A549 (cell line): ENCODE measurements at regions of chr17 and their contacts with region 1.

Region 1: GRCh38 chr17:40443583-40444327 is 505 bp downstream of the IGFBP4 start:
- DNase-seq: peak; percentile 81 to 84
- ATAC-seq: peak; percentile 35 to 60
- H3K4me3 ChIP-seq: peak overlapping the region; percentile 78
- H3K27ac ChIP-seq: peak overlapping the region; percentile 98
- H3K4me1 ChIP-seq: peaks cover 30% of the 10 kb centered on the region
- CTCF ChIP-seq: peak; percentile 44
- EP300 ChIP-seq: no peak
- POLR2A ChIP-seq: peak; percentile 52
- RAD21 ChIP-seq: peak; percentile 27 to 34; a peak in 1 of 5 replicates

Region 2: DNA sequence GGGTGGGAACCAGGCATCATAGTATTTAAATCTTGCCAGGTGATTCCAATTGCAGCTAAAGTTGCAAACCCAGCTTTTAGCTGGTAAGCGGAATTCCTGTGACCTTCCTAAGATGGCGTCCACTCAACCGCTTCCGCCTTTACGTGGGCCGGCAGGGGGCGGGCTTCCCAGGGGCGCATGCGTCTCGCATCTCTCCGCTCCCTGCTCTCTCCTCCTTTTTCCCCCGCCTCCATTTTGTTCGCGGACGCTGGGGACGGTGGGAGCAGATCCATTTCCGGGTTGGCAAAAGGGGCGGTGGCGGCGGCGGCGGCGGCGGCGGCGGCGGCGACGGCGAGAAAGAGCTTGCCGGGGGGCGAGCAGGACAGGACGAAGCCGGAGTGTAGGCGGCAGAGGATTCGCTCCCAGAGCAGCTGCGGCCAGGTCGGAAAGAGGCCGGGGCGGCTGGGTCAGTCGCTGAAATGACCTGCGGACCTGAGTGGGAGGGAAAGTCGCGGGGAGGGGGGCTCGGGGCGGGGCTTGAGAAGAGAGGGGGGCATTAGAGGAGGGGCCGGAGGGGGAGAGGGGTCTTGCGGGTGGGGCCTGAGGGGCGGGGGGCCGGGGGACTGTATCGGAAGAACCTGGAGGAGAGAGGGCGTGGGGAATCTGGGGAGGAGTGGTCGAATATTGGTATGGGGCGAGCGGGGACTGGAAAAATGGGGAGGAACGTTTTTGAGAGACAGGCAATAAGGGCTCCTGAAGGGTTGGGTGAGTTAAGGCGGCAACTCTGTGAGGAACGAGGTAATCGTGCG is 224.5 kb before region 1 on chr17 and contains the start of gene WIPF2:
- CTCF ChIA-PET with region 1: no interaction called
- POLR2A ChIA-PET with region 1: no interaction called
- DNase-seq: peak; percentile 96 to 98
- ATAC-seq: peak; percentile 95 to 98
- H3K4me3 ChIP-seq: peak within 1 kb of the TSS; percentile 70
- H3K27ac ChIP-seq: peak within 1 kb of the TSS; percentile 87 to 92
- H3K4me1 ChIP-seq: peaks cover 17% of the 10 kb centered on the region; the same call in 2 of the 3 replicates
- CTCF ChIP-seq: 0 out of 3 replicates have a peak, but pooled peaks have one; percentile 29
- EP300 ChIP-seq: no peak
- POLR2A ChIP-seq: no peak; the same call in 1 of the 2 replicates
- RAD21 ChIP-seq: no peak
- polyA plus RNA-seq, gene WIPF2: 13.8 and 15.3 TPM in 2 replicates

Region 3: GRCh38 chr17:40355123-40355803 is 88.5 kb before region 1 on chr17:
- CTCF ChIA-PET with region 1: interaction called, 11 read pairs
- POLR2A ChIA-PET with region 1: no interaction called
- DNase-seq: peak; percentile 77 to 97
- ATAC-seq: peak; percentile 58 to 84
- H3K4me3 ChIP-seq: no peak overlapping the region
- H3K27ac ChIP-seq: peak overlapping the region in 1 of 2 experiments; percentile 62; a peak in 3 of 6 replicates
- H3K4me1 ChIP-seq: peaks cover 52% of the 10 kb centered on the region
- CTCF ChIP-seq: peak; percentile 98
- EP300 ChIP-seq: no peak
- POLR2A ChIP-seq: no peak
- RAD21 ChIP-seq: peak; percentile 99 to 100

Region 4: GRCh38 chr17:40422990-40423616 is 20.7 kb before region 1 on chr17:
- CTCF ChIA-PET with region 1: interaction called, 53 read pairs
- POLR2A ChIA-PET with region 1: interaction called, 8 read pairs
- DNase-seq: peak; percentile 64 to 65
- ATAC-seq: peak; percentile 66 to 82; a peak in 5 of 6 replicates
- H3K4me3 ChIP-seq: no peak overlapping the region
- H3K27ac ChIP-seq: peak overlapping the region in 1 of 2 experiments; percentile 17; a peak in 1 of 6 replicates
- H3K4me1 ChIP-seq: peaks cover 25% of the 10 kb centered on the region
- CTCF ChIP-seq: peak; percentile 41
- EP300 ChIP-seq: no peak
- POLR2A ChIP-seq: no peak
- RAD21 ChIP-seq: no peak; a peak in 1 of 5 replicates

Region 5: DNA sequence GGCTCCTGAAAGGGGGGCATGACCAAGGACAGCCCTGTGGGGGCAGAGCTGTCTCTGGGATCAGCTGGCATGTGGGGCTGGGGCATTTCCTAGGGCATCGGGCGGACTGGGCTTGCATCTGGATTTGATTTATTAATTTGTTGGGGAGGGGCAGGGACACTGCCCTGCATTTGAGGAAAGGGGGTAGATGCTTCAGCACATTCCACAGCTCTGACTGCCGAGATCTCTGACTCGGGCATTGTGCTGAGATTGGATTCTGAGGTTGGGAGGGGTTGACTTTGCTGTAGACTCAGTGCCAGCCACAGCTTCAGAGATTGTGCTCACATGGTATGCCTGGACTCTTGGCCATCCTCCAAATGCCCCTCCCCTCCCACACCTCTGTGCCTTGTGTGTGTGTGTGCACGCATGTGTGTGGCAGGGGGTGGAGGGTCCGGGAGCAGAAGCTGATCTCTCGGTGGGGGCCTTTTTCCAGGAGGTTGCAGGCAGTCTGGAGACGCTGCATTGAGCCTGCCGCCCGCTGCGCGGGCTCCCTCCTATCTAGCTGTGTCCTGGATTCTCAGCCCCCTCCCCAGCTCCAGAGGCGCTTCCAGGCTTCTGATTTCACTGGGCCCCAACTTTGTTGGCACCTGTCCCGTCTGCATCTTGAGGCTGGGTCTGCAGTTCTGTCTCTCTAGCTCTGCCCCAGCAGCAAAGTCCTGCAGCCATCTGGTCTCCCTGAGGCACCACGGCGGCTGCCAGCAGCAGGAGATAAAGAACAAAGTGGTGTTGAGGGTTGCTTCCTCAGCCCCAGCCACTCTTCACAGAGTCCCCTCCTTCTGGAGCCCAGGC is 14.4 kb after region 1 on chr17:
- CTCF ChIA-PET with region 1: interaction called, 338 read pairs
- POLR2A ChIA-PET with region 1: interaction called, 14 read pairs
- DNase-seq: peak in 1 of 2 experiments; percentile 68
- ATAC-seq: peak in 1 of 2 experiments; percentile 7; a peak in 3 of 6 replicates
- H3K4me3 ChIP-seq: peak overlapping the region; percentile 16
- H3K27ac ChIP-seq: peak overlapping the region; percentile 71 to 90
- H3K4me1 ChIP-seq: peaks cover 100% of the 10 kb centered on the region
- CTCF ChIP-seq: no peak
- EP300 ChIP-seq: no peak; a peak in 1 of 5 replicates
- POLR2A ChIP-seq: no peak
- RAD21 ChIP-seq: no peak

Region 6: DNA sequence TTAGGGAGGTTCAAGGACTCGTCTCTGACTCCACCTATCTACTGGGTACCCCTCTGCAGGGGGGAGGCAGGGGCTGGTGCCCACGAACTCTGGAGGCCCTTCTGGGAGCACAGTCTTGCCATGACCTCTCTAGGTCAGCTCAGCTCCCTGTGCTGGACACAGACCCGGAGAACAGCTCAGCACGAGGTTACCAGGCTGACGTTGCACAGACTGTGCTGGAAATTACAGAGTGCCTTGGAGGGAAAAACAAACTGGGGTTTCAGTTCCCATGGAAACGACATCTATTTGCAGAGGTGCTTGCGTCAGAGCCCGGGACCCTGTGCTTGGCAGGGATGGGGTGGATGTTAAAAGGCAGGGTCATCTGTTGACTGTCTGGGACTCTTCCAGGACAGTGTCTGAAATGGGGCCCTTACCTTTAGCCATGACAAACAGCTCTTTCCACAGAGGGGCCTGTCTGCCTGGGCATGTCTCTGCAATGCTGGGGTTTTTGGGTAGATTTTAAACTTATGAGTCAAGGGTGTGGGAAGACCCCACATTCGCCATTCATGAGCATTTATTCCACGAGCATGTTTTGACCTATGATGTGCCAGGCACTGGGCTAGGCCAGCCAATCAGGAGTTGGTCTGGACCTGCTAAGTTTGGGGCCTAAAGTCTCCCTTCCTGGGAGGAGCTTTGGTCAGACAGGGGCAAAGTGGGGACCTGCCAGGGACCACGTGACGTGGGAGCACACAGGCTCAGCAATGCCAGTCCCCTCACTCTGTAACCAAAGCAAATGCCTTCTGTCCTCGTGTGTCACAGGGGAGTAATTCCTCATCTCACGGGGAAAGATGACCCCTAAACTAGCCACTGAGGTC is 99.0 kb after region 1 on chr17:
- CTCF ChIA-PET with region 1: interaction called, 822 read pairs
- POLR2A ChIA-PET with region 1: interaction called, 10 read pairs
- DNase-seq: peak; percentile 99 to 100
- ATAC-seq: peak; percentile 87 to 90
- H3K4me3 ChIP-seq: no peak overlapping the region
- H3K27ac ChIP-seq: peak overlapping the region; percentile 95 to 99
- H3K4me1 ChIP-seq: peaks cover 71% of the 10 kb centered on the region
- CTCF ChIP-seq: no peak
- EP300 ChIP-seq: peak; percentile 100
- POLR2A ChIP-seq: no peak
- RAD21 ChIP-seq: peak; percentile 4 to 55; a peak in 4 of 5 replicates

Region 7: DNA sequence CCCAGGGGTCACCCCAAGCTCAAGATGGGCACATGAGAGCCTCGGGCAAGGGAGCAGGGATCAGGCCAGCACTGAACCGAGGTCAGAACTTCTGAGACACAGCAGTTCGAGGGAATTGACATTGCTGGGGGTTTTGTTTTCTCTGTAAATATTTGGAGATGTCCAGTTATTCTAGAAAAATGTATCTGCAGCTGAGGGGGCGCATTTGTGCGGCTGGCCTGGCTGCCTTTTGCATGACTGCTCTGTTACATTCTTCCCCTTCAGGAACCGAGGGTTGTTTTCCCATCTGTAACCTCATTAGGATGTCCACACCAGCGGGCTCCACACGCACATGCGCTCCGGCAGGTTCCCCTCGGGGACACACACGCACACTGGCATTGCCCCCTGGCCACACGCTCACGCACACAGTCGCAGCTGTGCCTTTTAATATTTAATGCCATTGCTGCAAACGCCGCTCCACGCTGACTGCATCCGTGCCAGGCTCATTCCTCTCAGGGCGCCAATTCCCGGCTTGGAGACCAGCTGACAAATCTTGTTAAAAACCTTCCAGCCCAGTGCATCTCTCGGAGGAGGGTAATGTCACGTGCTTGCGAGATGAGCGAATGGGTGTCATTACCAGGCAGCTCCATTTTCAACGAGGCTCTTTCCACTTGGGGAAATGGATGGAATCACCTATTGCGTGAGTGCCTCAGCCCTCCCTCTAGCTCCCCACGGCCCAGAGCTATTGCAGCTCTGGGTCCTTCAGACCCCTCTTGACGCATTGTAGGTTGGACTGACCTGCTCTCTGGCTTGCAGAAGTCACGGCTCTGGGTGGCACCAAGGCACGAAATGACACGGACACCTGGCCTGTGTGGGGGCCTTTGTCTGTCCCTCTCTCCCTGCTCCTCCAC is 108.4 kb after region 1 on chr17:
- CTCF ChIA-PET with region 1: interaction called, 169 read pairs
- POLR2A ChIA-PET with region 1: interaction called, 23 read pairs
- DNase-seq: peak; percentile 95 to 99
- ATAC-seq: peak; percentile 51 to 75
- H3K4me3 ChIP-seq: peak overlapping the region; percentile 17; the same call in 2 of the 3 replicates
- H3K27ac ChIP-seq: peak overlapping the region; percentile 95 to 99
- H3K4me1 ChIP-seq: peaks cover 84% of the 10 kb centered on the region
- CTCF ChIP-seq: no peak
- EP300 ChIP-seq: peak; percentile 100
- POLR2A ChIP-seq: no peak
- RAD21 ChIP-seq: peak; percentile 43 to 62